Left cardiac atrium (tissue), 4 donors: ENCODE measurements at regions of chr2 and their contacts with region 1.

Region 1: GRCh38 chr2:196309691-196310090 is 138.3 kb upstream of the STK17B start:
- DNase-seq: no peak
- ATAC-seq: peak in 1 of 2 donors; percentile 23

Region 2: DNA sequence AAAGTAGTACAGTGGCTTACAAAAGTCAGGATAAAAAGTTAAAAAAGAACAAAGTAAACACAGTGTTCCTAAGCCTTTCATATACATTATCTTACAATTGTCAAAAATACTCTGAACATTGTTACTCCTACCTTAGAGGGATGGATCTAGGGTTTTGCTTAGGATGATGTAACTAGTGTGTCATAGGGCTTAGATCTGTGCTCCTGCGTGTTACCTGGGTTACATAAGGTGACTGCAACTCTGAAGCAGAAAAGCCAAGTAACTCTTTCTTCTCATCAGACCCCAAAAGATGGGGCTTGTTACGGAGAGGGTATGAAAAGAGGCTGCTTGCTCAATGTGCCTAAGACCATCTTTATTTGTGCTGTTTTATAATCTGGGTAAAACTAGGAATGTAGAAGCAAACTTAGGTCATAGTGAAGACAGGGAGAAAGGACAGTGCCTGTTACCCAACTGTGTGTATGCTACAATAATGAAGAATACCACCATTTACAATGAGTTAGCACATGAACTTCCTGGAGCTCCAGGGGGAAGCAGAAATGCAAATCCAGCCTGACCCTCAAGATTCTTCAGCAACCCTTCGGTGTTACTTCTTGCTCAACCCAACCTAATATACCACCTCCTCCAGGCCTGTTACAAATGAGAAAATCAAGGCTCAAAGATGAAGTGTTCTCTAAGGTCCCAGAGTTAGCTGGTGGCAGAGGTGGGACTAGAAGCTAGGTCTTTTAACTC is 96.3 kb before region 1 on chr2:
- intact Hi-C with region 1: no loop called
- DNase-seq: no peak
- ATAC-seq: no peak

Region 3: DNA sequence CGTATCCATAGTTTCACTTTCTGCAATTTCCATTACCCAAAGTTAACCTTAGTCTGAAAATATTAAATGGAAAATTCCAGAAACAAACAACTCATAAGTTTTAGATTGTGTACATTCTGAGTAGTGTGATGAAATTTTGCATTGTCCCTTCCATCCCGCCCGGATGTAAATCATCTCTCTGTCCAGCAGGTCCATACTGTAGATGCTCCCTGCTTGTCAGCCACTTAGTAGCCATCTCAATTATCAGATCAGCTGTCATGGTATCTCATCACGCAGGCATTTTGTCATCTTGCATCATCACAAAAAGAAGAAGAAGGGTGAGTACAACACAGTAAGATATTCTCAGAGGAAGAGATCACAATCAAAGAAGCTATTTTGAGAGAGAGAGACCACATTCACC is 46.6 kb after region 1 on chr2:
- intact Hi-C with region 1: no loop called
- DNase-seq: no peak
- ATAC-seq: no peak

Region 4: GRCh38 chr2:196427986-196428634 is 118.4 kb after region 1 on chr2:
- intact Hi-C with region 1: no loop called
- DNase-seq: no peak
- ATAC-seq: no peak

Region 5: GRCh38 chr2:196441527-196441926 is 131.8 kb after region 1 on chr2:
- intact Hi-C with region 1: loop called in 1 of 2 experiments (anchors 5 kb)
- DNase-seq: no peak
- ATAC-seq: no peak